AG04450 (cell line): ENCODE measurements at regions of chr10 and their contacts with region 1.

Region 1: DNA sequence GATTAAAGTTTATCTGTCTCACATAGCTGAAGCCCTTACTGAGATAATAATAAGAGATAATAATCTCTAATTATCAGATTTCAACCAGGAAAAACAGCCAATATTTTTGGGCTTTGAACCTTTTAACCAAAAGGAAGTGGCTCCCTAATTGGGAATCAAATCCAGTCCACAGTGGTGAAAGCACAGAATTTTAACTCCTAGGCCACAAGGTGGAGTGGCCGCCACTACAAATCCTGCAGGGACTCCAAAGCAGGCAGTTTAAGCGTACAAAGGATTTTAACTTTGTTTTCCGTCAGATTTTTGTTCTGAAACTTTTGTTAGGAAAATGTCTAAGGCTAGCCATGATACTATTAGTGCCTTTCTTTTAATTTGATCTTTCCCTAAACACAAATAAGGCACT is 99.6 kb upstream of the CCNY start:
- DNase-seq: peak; percentile 16
- H3K4me3 ChIP-seq: no peak overlapping the region
- H3K27ac ChIP-seq: no peak overlapping the region
- H3K27me3 ChIP-seq: no peaks in the 10 kb centered on the region
- CTCF ChIP-seq: peak; percentile 73

Region 2: DNA sequence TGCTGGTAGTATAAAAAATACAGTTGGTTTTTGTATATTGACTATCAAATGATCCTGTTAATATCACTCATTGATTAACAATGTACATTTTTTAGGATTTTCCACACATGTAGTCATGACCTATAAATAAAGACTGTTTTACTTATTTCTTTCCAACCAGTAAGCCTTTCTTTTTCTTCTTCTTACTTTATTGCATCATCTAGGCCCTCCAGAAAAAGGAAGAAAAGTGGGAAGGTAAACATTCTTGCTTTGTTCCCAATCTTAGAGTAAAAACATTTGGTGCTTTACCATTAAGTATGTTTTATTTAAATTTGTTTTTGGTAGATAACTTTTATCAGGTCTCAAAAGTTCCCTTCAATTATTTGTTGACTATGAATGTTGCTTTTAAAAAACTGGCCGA is 52.5 kb after region 1 on chr10:
- CTCF ChIA-PET with region 1: interaction called, 10 read pairs
- POLR2A ChIA-PET with region 1: no interaction called
- DNase-seq: no peak
- H3K4me3 ChIP-seq: no peak overlapping the region
- H3K27ac ChIP-seq: no peak overlapping the region
- H3K27me3 ChIP-seq: no peaks in the 10 kb centered on the region
- CTCF ChIP-seq: no peak